ENCODE measurements at regions of chr9 and their contacts with region 1.

Region 1: GRCh38 chr9:125746017-125746773 is 978 bp upstream of the PBX3 start:
- DNase-seq: peak; percentile 95
- H3K4me3 ChIP-seq: peak overlapping the region; percentile 84 to 85
- H3K27ac ChIP-seq: peak overlapping the region; percentile 88 to 91
- H3K4me1 ChIP-seq: no peaks in the 10 kb centered on the region
- H3K27me3 ChIP-seq: no peaks in the 10 kb centered on the region
- CTCF ChIP-seq: peak in 1 of 4 experiments; percentile 6
- POLR2A ChIP-seq: peak; percentile 58

Region 2: DNA sequence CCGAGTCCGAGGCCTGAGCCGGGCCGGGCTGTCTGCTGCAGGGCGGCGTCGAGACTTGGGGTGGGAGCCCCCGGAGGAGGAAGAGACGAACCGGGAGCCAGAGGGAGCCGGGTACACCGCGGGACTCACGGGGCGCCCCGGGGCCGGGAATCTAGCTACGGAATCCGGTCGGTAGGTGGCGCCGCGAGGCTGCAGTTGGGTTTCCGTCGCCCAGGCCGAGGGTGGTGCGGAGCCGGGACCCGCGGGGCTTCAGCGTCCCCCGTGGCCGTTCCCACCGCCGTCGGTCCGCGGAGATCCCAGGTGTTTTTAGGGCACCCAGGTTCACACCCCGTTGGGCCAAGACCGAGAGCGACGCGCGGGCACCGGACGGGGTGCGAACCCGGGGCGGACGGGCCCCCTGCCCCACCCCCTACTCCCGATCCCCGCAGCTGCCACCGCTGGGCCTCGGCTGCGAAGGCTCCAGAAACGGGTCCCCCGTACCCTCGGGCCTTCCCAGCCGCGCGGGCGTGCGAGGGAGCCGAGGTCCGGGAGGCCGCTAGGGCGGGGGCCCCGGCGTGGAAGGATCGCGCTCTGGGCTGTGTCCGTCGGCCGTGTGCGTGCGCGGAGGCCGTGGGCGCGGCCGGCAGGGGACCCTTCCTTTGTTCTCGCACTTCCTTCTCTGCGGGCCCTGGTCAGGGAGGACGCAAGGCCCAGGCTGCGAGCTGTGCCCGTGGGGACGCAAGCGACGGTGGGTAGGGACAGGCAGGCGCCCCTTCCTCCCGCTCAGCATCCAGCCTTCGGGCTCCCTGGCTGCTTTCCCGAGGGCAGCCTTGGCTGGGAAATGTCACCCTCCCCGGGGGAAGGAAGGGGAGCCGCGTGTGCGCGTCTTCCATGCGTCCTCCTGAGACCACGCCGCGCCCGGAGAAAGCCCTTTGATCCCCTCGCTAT is 338.0 kb before region 1 on chr9:
- intact Hi-C with region 1: loop called (anchors 10 kb)
- DNase-seq: peak; percentile 61
- H3K4me3 ChIP-seq: peak overlapping the region; percentile 49 to 54
- H3K27ac ChIP-seq: peak overlapping the region; percentile 38 to 67
- H3K4me1 ChIP-seq: peaks cover 2% of the 10 kb centered on the region
- H3K27me3 ChIP-seq: no peaks in the 10 kb centered on the region
- CTCF ChIP-seq: peak; percentile 79 to 89 (median 84)
- POLR2A ChIP-seq: no peak

Region 3: DNA sequence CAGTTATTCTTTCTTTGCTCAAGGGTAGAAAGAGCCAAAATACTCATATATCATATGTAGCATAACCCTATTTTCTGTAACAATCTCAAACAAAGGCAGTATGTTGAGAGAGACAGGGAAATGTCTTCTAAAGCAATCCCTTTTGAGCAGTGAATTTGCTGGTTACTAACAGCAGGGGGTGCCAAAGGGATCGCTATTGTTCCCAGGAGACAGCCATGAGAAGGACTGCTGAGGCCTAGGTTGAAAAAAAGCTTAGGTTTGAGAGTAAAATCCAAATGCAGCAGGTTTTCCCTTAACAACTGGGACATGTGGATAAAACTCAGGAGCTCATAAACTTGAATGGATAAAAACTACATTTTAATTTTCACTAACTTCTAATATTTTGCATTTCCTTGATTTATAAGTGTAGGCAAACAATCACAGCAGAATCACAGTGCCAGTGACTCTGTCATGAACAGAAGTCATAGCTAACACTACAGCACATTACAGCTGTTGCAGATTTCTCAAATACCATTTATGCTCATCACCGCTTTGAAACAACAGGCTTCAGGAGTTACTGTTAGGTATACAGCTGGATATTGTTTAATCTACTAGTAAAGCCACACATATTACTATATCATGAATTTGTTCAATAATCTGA is 187.6 kb before region 1 on chr9:
- intact Hi-C with region 1: loop called (anchors 5 kb)
- DNase-seq: peak; percentile 59
- H3K4me3 ChIP-seq: no peak overlapping the region
- H3K27ac ChIP-seq: no peak overlapping the region
- H3K4me1 ChIP-seq: no peaks in the 10 kb centered on the region
- H3K27me3 ChIP-seq: no peaks in the 10 kb centered on the region
- CTCF ChIP-seq: peak; percentile 41 to 74 (median 64)
- POLR2A ChIP-seq: no peak

Region 4: DNA sequence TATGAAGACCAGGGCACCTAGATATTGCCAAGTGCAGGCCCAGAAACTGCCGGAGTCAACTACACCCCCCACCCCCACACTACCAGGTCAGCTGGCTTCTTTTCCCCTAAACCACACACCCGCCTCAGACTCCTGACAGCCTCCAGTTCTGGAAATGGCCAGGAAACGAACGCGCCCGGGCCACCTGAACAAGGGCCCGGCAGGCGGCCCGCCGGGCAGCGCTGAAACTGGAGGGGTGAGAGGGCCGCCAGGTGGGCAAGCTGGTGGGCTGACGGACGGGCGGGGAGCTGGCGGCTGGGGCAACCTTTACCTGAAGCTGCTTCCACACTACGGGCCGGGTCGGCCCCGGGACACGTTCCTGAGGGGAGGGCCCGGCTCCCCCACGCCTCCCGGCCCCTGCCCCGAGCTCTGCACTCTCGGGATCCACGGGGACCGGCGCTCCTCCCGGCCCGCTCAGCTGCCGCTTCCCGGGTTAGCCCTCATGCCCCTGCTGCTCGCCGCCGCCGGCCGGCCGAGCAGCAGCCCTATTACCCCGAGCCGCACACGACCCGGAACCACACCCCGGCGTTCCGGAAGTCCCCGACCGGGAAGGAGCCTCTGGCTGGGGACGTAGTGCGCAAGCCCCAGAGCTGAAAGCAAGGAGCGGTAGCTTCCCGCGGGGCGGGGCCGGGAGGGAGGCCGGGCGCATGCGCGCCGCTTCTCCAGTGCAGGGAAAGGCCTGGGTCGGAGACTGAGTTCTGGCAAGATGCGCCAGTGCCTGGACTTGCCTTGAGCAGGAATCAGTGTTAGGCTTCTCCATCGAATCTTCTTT is 39.3 kb before region 1 on chr9 and contains the start of gene MAPKAP1:
- intact Hi-C with region 1: loop called (anchors 2 kb)
- DNase-seq: peak; percentile 93
- H3K4me3 ChIP-seq: peak within 1 kb of the TSS; percentile 71 to 76
- H3K27ac ChIP-seq: peak within 1 kb of the TSS; percentile 41 to 55
- H3K4me1 ChIP-seq: peaks cover 7% of the 10 kb centered on the region
- H3K27me3 ChIP-seq: no peaks in the 10 kb centered on the region
- CTCF ChIP-seq: peak in 2 of 4 experiments; percentile 1 to 32
- POLR2A ChIP-seq: peak; percentile 58
- total RNA-seq, gene MAPKAP1: 62.4 to 91.2 TPM

Region 5: DNA sequence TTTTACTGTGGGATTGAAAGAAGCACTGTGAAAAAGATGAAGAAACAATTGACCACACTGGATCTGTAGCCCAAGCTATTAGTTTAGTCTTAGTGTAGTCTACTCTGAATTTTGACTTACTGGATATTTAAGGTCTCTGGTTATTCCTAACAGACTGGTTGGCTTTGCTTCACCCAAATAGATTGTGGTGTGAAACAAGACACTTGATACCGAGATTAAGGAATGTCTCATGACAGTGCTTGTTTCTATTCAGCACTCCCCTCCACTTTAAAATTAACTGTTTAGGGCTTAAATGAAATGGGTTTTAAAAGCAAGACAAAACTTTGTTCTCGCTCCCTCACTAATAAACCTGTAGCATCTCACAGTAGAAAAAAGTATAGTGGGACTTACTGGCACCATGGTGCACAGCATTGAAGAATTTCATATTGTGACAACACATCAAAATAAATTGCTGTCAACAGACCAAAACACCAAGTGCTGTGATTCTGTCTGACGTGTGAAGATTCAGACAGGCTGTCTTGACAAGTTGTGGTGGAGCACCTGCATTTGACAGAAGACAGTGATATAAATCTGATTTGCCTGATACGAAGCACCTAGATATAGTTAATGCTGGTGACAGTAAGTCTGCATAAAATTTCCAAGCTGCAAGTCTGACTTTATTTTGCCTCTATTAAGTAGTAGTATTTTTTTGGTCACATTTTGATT is 74.1 kb after region 1 on chr9:
- intact Hi-C with region 1: loop called (anchors 5 kb)
- DNase-seq: no peak
- H3K4me3 ChIP-seq: no peak overlapping the region
- H3K27ac ChIP-seq: no peak overlapping the region
- H3K4me1 ChIP-seq: no peaks in the 10 kb centered on the region
- H3K27me3 ChIP-seq: no peaks in the 10 kb centered on the region
- CTCF ChIP-seq: no peak
- POLR2A ChIP-seq: no peak

Region 6: DNA sequence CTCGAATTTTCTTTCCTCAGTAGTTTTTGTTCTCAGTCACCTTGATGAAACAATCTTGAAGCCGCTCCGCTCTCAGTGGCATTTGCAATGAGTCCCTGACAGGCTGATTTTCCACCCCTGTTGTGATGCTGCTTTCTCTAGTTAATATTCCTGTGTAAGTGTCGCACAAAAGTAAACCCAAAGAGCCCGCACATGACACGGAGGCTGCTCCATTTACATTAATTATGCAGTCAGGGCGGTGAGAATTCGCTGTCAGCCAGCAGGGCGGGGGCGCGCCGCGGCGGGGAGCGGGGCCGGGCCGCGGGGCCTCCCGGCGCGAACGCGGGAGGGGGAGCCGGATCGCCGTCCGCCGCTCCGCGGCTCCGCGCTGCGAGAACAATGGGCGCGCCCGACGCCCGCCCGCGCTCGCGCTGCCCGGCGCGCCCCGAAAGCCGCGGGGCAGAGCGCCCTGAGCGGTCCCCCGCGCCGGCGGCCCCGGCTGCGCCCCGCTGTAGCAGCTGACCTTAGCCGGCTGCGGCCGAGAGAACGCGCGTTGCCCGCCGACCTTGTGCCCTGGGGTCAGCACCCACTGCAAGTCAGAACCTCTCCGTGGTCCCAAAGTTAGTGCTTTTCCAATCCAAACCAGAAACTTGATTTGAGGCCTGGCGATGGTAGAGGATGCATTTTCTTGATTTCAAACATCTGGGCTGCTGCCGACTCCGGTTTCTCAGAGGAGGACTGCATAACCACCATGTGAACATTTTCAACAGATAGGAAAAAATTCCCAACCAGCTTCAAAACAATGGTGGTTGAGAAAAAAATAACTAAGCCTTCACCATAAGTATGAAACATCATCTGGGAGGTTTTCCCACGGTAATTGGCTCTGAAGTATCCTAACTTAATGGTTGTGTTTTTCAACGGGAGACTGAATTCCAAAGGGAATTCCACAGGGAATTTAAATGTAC is 143.6 kb after region 1 on chr9:
- intact Hi-C with region 1: loop called (anchors 5 kb)
- DNase-seq: no peak
- H3K4me3 ChIP-seq: peak overlapping the region; percentile 38
- H3K27ac ChIP-seq: peak overlapping the region; percentile 46 to 47
- H3K4me1 ChIP-seq: peaks cover 5% of the 10 kb centered on the region
- H3K27me3 ChIP-seq: no peaks in the 10 kb centered on the region
- CTCF ChIP-seq: no peak
- POLR2A ChIP-seq: no peak